Naive thymus-derived CD4-positive, alpha-beta T cell (primary cell): ENCODE measurements at regions of chr19 and their contacts with region 1.

Region 1: DNA sequence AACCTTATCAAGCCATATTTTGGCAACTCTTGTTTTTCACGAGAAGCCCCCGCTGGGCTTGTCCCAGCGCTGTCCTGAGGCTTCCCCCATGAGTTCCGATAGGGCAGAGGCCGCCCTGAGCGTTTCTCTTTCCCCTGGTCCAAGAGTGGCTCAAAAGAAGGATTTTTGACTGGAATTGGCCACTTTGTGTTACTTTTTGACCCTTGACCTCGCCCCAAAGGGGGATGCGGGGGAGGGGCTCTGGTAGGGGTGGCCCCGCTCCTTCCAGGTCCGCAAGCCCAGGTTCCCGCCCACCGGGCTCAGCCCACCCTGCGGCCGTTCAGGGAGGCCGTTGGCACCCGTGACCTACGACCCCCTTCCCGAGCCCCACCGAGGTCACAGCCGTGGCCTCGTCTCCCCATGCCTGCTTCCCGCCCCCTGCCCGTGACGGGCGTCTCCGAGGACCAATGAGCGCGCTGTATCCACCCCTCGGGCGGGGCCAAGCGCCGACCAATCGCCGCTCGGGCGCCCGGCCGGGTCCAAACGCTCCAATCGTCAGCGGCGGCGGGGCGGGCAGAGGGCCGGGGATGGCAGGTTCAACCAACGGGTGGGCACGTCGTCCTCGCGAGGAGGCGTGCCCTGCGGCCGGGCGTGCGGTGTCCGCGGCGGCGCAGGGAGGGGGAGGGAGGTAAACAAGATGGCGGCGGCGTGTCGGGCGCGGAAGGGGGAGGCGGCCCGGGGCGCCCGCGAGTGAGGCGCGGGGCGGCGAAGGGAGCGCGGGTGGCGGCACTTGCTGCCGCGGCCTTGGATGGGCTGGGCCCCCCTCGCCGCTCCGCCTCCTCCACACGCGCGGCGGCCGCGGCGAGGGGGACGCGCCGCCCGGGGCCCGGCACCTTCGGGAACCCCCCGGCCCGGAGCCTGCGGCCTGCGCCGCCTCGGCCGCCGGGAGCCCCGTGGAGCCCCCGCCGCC is at the start of gene STK11:
- DNase-seq: peak; percentile 98 to 100 (median 99)
- ATAC-seq: peak; percentile 97
- H3K4me3 ChIP-seq: peak within 1 kb of the TSS; percentile 81
- H3K4me3 Mint-ChIP-seq: peak within 1 kb of the TSS; percentile 92 to 98 (median 94)
- H3K27ac ChIP-seq: peak within 1 kb of the TSS; percentile 74
- H3K27ac Mint-ChIP-seq: peak within 1 kb of the TSS; percentile 85 to 94 (median 88)
- H3K4me1 ChIP-seq: peaks cover 27 to 34% of the 10 kb centered on the region in 2 donors
- H3K4me1 Mint-ChIP-seq: peaks cover 15 to 45% (median 29%) of the 10 kb centered on the region in 7 donors
- H3K27me3 ChIP-seq: no peaks in the 10 kb centered on the region
- H3K27me3 Mint-ChIP-seq: no peaks in the 10 kb centered on the region
- total RNA-seq, gene STK11: 67.7 to 91.3 (median 71.6) TPM

Region 2: GRCh38 chr19:1103708-1104310 is 101.6 kb before region 1 on chr19 and contains the start of gene GPX4:
- CTCF ChIA-PET with region 1: no interaction called
- POLR2A ChIA-PET with region 1: interaction called, 4 read pairs
- intact Hi-C with region 1: loop called in 1 of 2 experiments (anchors 1 kb)
- DNase-seq: peak; percentile 90 to 98 (median 95)
- ATAC-seq: peak; percentile 91
- H3K4me3 ChIP-seq: peak within 1 kb of the TSS; percentile 79
- H3K4me3 Mint-ChIP-seq: peak within 1 kb of the TSS; percentile 66 to 82 (median 78)
- H3K27ac ChIP-seq: peak within 1 kb of the TSS; percentile 100
- H3K27ac Mint-ChIP-seq: peak within 1 kb of the TSS; percentile 79 to 96 (median 93)
- H3K4me1 ChIP-seq: peaks cover 13 to 18% of the 10 kb centered on the region in 2 donors
- H3K4me1 Mint-ChIP-seq: peaks cover 17 to 48% (median 36%) of the 10 kb centered on the region in 7 donors
- H3K27me3 ChIP-seq: no peaks in the 10 kb centered on the region
- H3K27me3 Mint-ChIP-seq: no peaks in the 10 kb centered on the region
- total RNA-seq, gene GPX4: 122 to 235 (median 194) TPM

Region 3: DNA sequence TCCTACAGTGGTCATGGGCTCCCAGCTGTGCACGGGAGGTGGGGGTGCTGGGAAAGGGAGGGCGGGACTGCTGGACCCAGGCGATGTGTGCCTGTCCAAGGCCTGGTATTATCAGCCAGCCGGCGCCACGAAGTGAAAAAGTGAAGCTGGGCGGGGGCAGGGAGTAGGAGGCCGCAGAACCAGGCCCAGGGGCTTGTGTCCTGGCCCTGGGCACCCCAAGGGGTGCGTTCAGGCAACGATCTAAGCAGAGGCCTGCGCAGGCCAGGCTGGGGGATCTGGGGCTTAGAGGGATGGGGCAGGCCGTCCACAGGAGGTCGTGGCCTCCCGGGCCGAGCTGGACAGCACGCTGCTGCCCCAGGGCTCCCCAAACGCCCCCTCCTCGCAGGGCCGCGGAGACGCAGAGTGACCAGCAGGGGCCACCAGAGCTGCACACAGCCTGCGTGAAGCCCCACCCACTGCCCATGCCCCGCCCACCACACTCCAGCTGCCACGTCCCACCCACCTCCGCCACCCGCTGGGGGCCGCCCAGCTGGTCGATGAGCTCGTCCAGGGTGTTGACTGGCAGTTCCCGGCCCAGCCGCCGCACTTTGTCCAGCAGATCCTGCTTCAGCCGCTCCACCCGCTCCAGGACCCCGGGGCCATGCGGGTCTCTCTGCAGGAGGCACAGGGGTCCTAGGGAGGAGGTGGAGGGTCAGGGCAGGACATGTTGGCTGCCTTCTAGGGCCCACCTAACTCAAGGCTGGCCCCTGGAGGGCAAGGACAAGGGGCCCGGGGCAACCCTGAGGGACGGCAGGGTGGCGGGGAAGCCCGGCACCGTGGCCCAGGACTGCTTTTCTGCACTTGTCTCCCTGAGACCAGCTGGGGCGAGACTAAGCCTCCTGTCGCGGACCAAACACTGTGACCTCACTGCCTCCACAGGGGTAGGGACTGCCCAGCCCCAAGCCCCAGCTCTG is 92.1 kb before region 1 on chr19:
- CTCF ChIA-PET with region 1: interaction called, 11 read pairs
- POLR2A ChIA-PET with region 1: interaction called, 3 read pairs
- intact Hi-C with region 1: no loop called
- DNase-seq: peak; percentile 73 to 86 (median 83)
- ATAC-seq: peak; percentile 94
- H3K4me3 ChIP-seq: no peak overlapping the region
- H3K4me3 Mint-ChIP-seq: no peak overlapping the region
- H3K27ac ChIP-seq: peak overlapping the region; percentile 59
- H3K27ac Mint-ChIP-seq: peak overlapping the region in 3 of 9 donors; percentile 36 to 77 (median 74)
- H3K4me1 ChIP-seq: peaks cover 0 to 8% of the 10 kb centered on the region in 2 donors
- H3K4me1 Mint-ChIP-seq: peaks cover 0 to 2% (median 0%) of the 10 kb centered on the region in 7 donors
- H3K27me3 ChIP-seq: no peaks in the 10 kb centered on the region
- H3K27me3 Mint-ChIP-seq: no peaks in the 10 kb centered on the region

Region 4: DNA sequence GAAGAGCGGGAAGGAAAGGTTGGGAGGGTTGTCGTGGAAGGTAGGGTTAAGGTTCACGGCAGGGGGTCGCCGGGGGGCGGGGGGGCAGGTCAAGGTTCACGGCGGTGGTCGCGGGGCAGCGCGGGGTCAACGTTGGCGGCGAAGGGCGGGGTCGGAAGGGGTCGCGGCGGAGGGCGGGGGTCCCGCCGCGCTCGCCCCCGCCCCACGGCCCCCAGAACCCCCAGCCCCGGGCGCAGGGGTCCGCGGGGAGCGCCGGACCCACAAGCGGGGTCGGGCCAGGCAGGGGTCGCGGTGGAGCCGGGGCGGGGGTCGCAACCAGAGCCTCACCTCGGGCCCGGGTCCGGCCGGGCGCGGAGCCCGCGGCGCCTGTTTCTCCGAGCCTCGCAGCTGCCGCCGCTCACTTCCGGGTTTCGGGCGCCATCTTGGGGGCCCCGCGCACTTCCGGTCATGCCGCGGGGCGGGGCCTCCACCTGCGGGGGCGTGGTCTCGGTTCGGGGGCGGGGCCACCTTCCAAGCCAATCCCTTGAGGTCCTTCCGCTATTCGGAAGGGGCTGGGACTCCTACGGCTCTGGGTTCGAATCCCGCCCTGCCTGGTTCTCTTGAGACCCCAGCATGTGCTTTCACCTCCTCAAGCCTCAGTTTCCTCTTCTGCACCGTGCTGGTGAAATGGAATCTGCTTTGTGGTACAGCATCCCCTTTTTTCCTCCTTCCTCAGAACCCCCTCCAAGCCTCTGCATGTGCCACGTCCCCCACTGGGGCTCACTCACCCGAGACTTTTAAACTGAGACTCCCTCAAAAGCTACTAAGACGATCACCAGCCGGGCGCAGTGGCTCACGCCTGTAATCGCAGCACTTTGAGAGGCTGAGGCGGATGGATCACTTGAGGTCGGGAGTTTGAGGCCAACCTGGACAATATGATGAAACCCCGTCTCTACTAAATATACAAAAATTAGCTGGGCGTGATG is 31.3 kb before region 1 on chr19 and contains the start of gene SBNO2:
- CTCF ChIA-PET with region 1: no interaction called
- POLR2A ChIA-PET with region 1: interaction called, 5 read pairs
- intact Hi-C with region 1: loop called in 1 of 2 experiments (anchors 1 kb)
- DNase-seq: peak; percentile 74 to 98 (median 85)
- ATAC-seq: peak; percentile 96
- H3K4me3 ChIP-seq: peak within 1 kb of the TSS; percentile 77
- H3K4me3 Mint-ChIP-seq: peak within 1 kb of the TSS; percentile 80 to 94 (median 88)
- H3K27ac ChIP-seq: peak within 1 kb of the TSS; percentile 87
- H3K27ac Mint-ChIP-seq: peak within 1 kb of the TSS; percentile 89 to 97 (median 94)
- H3K4me1 ChIP-seq: peaks cover 3 to 17% of the 10 kb centered on the region in 2 donors
- H3K4me1 Mint-ChIP-seq: peaks cover 16 to 43% (median 32%) of the 10 kb centered on the region in 7 donors
- H3K27me3 ChIP-seq: no peaks in the 10 kb centered on the region
- H3K27me3 Mint-ChIP-seq: peaks cover 0 to 2% (median 0%) of the 10 kb centered on the region in 5 donors
- total RNA-seq, gene SBNO2: 88.6 to 137 (median 104) TPM